ENCODE measurements at regions of chr14 and their contacts with region 1.

Region 1: DNA sequence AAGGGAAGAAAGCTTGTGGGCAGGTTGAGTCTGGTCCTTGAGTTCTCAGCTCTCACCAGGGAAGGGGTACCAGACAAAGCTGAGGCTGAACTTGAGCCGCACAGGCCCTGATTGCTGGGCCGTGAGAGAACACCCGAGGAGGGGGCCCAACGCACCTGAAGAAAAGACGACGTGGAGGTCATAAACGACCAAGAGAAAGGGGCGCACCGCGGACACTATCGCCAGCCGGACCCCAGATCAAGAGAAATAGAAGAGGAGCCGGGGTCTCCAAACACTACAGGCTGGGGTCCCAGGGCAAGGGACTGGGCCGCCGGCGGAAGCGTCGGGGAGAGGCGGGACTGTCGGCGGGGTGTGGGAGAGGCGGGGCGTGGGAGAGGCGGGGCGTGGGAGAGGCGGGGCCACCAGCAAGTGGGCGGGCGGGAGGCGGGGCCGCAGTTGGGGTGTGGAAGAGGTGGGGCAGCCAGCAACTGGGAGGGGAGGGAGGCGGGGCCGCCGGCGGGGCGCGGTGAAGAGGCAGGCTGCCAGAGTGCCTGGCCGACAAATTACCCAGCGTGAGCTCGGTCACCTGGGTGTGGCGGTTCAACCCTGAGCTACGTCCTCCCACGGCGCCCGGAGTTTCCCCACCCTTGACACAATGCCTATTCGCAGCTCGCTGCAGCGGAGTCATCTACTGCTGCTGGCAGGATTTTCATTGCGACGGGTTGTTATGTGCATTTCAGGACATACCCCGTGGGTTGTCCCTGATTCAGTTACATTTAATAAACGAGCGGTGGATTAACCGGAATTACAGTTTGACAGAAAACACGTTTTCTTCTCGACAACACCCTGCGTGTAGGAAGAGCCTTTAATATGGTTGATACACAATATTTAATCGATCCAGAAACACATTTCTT is 15.5 kb upstream of the NEMF start:
- DNase-seq: peak; percentile 99
- H3K4me3 Mint-ChIP-seq: peak overlapping the region; percentile 90
- H3K27ac Mint-ChIP-seq: peak overlapping the region; percentile 98
- H3K4me1 Mint-ChIP-seq: peaks cover 26% of the 10 kb centered on the region
- H3K27me3 Mint-ChIP-seq: no peaks in the 10 kb centered on the region

Region 2: GRCh38 chr14:49745191-49745590 is 122.9 kb before region 1 on chr14:
- CTCF ChIA-PET with region 1: no interaction called
- POLR2A ChIA-PET with region 1: no interaction called
- DNase-seq: no peak
- H3K4me3 Mint-ChIP-seq: no peak overlapping the region
- H3K27ac Mint-ChIP-seq: no peak overlapping the region
- H3K4me1 Mint-ChIP-seq: no peaks in the 10 kb centered on the region
- H3K27me3 Mint-ChIP-seq: no peaks in the 10 kb centered on the region

Region 3: GRCh38 chr14:49879683-49880204 is 11.7 kb after region 1 on chr14:
- CTCF ChIA-PET with region 1: interaction called, 53 read pairs
- POLR2A ChIA-PET with region 1: interaction called, 17 read pairs
- DNase-seq: peak; percentile 76
- H3K4me3 Mint-ChIP-seq: no peak overlapping the region
- H3K27ac Mint-ChIP-seq: peak overlapping the region; percentile 50
- H3K4me1 Mint-ChIP-seq: peaks cover 48% of the 10 kb centered on the region
- H3K27me3 Mint-ChIP-seq: no peaks in the 10 kb centered on the region

Region 4: GRCh38 chr14:50038398-50039119 is 170.5 kb after region 1 on chr14:
- CTCF ChIA-PET with region 1: interaction called, 24 read pairs
- POLR2A ChIA-PET with region 1: interaction called, 88 read pairs
- DNase-seq: peak; percentile 70
- H3K4me3 Mint-ChIP-seq: peak overlapping the region; percentile 79
- H3K27ac Mint-ChIP-seq: peak overlapping the region; percentile 98
- H3K4me1 Mint-ChIP-seq: peaks cover 83% of the 10 kb centered on the region
- H3K27me3 Mint-ChIP-seq: no peaks in the 10 kb centered on the region

Region 5: GRCh38 chr14:50085570-50086320 is 217.7 kb after region 1 on chr14:
- CTCF ChIA-PET with region 1: interaction called, 27 read pairs
- POLR2A ChIA-PET with region 1: interaction called, 54 read pairs
- DNase-seq: no peak
- H3K4me3 Mint-ChIP-seq: peak overlapping the region; percentile 28
- H3K27ac Mint-ChIP-seq: peak overlapping the region; percentile 98
- H3K4me1 Mint-ChIP-seq: peaks cover 86% of the 10 kb centered on the region
- H3K27me3 Mint-ChIP-seq: peaks cover 4% of the 10 kb centered on the region

Region 6: DNA sequence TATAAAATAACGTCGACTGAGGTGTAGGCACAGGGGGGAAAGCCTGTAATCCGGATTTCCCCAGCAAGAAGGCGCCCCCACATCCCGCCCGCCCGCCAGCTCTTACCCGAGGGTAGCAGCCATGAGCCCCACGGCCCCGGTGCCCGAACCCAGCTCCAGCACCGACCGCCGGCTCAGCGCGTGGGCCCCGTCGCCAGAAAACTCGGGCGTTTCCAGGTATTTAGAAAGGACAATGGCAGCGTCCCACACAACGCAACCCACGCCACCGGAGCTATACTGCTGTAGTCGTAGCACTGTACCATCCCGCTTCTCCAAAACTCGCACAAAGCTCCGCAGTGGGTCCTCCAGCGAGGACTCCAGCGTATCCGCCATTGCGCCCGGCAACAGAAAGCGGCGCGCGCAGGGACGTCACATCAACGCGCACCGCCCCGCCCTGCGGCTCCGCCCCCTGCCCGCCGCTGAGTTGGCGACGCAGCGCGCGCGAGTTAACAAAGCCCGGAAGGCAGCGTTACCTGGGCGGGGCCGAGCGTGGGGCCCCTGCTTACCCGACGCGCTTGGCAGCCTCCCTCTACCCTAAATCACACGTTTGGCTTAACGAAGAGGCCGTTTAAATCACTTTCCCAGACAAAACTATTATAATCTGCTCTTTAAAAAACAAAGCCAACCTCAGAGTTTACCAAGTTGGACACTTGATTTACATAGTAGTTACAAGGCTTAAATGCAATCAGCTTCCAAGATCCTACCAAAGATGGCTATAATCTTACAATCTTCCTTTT is 248.3 kb after region 1 on chr14 and contains the start of gene VCPKMT:
- CTCF ChIA-PET with region 1: interaction called, 27 read pairs
- POLR2A ChIA-PET with region 1: interaction called, 68 read pairs
- DNase-seq: peak; percentile 97
- H3K4me3 Mint-ChIP-seq: peak within 1 kb of the TSS; percentile 99
- H3K27ac Mint-ChIP-seq: peak within 1 kb of the TSS; percentile 97
- H3K4me1 Mint-ChIP-seq: peaks cover 40% of the 10 kb centered on the region
- H3K27me3 Mint-ChIP-seq: no peaks in the 10 kb centered on the region
- total RNA-seq, gene VCPKMT: 7.5 to 9.5 TPM